GM23248 (cell line): ENCODE measurements at regions of chr7 and their contacts with region 1.

Region 1: GRCh38 chr7:82234457-82235049 is 209.0 kb downstream of the CACNA2D1 start:
- DNase-seq: peak; percentile 72
- H3K4me3 ChIP-seq: no peak overlapping the region
- H3K27ac ChIP-seq: no peak overlapping the region
- H3K4me1 ChIP-seq: 0 out of 2 replicates have a peak, but pooled peaks cover 9% of the 10 kb centered on the region
- H3K27me3 ChIP-seq: no peaks in the 10 kb centered on the region

Region 2: GRCh38 chr7:80900583-80901576 is 1333.7 kb before region 1 on chr7:
- in situ Hi-C with region 1: no loop called
- DNase-seq: peak; percentile 86
- H3K4me3 ChIP-seq: no peak overlapping the region
- H3K27ac ChIP-seq: peak overlapping the region; percentile 53
- H3K4me1 ChIP-seq: peaks cover 59% of the 10 kb centered on the region
- H3K27me3 ChIP-seq: no peaks in the 10 kb centered on the region

Region 3: DNA sequence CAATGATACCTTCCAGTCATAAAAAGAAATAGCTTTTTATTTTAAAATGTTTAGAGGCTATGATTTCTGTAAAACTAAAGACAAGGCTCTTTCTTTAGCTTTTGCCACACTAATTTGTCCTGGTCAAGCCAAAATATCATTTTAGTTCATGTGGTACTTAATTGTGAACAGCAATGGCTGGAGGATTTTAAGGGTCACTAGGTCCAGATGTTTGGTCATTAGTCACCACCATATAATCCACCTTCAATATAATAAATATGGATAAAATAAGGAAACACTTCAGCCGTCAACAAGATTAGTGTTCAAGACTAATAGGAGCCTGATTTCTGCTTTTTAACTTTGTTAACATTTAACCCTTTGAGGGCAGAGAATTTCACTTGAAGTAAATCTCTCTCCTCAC is 414.7 kb before region 1 on chr7:
- in situ Hi-C with region 1: no loop called
- DNase-seq: no peak
- H3K4me3 ChIP-seq: no peak overlapping the region
- H3K27ac ChIP-seq: no peak overlapping the region
- H3K4me1 ChIP-seq: no peaks in the 10 kb centered on the region
- H3K27me3 ChIP-seq: no peaks in the 10 kb centered on the region

Region 4: GRCh38 chr7:82481499-82482097 is 247.0 kb after region 1 on chr7:
- in situ Hi-C with region 1: loop called (anchors 10 kb)
- DNase-seq: peak; percentile 57
- H3K4me3 ChIP-seq: no peak overlapping the region
- H3K27ac ChIP-seq: no peak overlapping the region
- H3K4me1 ChIP-seq: no peaks in the 10 kb centered on the region
- H3K27me3 ChIP-seq: peaks cover 4% of the 10 kb centered on the region; the same call in 1 of the 2 replicates

Region 5: DNA sequence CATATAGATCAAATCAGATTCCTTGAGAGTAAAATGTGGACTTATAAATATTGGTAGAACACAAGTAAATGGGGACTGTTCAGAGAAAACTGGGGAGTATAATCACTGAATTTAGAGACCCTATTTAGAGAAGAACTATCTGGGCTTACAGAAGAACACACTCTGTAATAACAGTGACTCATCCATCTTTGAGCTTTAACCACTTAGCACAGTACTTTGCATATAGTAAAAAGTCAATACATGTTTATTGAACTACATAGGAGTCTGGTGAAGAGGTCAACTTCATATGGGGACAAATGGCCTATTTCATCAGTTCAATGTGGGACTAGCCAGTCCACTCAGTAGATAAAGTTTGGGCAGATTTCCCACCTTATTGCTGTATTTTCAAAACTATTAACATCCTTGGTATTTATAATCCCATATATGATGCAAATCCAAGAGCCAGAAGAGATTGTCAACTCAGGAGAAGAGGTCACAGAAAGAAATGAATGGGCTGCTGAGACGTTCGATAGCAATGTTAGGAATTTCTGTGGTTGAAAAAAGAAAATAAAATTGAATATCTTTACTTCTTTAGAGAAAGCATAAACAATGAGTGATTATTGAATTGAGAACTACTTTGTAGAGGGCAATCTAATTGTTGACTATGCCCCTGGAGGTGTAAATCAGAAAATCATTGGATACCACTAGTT is 328.3 kb after region 1 on chr7:
- in situ Hi-C with region 1: loop called (anchors 10 kb)
- DNase-seq: peak; percentile 71
- H3K4me3 ChIP-seq: 0 out of 2 replicates have a peak overlapping the region, but pooled peaks have one; percentile 5
- H3K27ac ChIP-seq: peak overlapping the region; percentile 4; the same call in 1 of the 2 replicates
- H3K4me1 ChIP-seq: peaks cover 17% of the 10 kb centered on the region
- H3K27me3 ChIP-seq: peaks cover 10% of the 10 kb centered on the region

Region 6: DNA sequence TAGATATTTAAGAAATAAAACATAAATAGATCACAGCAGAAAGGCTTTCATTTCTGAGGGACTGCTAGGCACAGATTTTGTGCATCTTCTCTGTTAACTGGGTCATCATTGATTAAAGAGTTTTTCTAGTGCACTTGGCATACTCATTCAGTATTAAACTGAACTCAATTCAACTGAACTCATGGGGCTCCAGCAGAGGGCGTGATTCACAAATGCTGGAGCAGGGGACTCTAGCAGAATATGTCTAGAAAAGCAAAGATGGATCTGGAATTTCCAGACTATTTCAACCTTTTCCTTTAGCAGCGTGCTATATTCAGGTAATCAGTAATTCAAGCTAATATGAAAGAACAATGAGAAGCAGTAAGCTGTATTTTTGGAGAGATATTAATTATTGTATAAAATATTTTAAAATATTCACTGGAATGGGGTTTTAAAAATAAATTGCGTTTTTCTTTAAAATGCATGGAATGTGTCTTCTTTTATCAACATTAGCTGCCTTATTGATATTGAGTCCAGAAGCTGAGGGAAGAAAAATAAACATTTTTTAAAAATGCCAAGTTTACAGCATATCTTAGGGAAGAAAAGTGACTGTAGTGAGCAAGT is 505.8 kb after region 1 on chr7:
- in situ Hi-C with region 1: loop called (anchors 25 kb)
- DNase-seq: peak; percentile 81
- H3K4me3 ChIP-seq: no peak overlapping the region
- H3K27ac ChIP-seq: no peak overlapping the region
- H3K4me1 ChIP-seq: peaks cover 6% of the 10 kb centered on the region; the same call in 1 of the 2 replicates
- H3K27me3 ChIP-seq: no peaks in the 10 kb centered on the region